Activated naive CD4-positive, alpha-beta T cell treated with anti-CD3 and anti-CD28 coated beads, Interleukin-2, amount 10 ng/mL, durations not matched to agents 7 days and 5 days (primary cell): ENCODE measurements at regions of chr10 and their contacts with region 1.

Region 1: DNA sequence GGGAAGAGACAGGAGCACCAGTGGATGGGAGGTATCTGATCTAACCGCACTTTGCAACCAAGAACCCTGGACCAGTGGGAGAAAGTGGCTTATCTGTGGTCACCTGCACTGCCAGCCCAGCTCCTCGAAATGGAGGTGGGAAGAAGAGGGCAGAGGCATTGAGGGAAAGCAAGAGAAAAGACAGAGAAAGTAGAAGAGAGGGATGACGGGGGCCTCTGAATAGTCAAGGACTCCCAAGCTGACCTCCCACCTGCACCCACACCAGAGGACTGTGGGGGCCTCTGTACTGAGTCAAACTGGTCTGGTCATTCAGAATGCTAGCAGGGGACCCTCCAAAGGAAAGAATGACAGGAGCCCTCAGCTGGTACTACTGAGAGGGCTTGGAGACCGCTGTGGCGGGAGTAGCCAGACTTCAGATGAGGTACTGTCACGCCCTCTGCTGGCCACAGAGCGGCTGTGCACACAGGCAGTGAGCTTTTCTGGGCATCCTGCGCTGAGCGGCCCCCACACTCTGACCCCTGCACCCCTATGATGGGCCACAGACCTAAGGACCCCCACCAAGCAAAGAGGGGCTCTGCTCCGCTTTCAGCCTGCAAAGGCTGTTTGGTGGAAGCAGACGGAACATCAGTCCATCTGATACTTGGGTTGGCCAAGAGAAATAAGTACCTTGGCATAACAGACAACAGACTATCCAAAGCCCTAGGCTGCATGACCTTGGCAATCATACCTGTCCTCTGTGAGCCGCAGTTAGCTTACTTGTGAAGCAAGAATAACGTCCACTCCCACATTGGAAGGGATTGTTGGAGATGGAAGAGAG is 112.9 kb downstream of the COL13A1 start:
- DNase-seq: peak; percentile 73
- H3K4me3 Mint-ChIP-seq: no peak overlapping the region
- H3K27ac Mint-ChIP-seq: no peak overlapping the region
- H3K4me1 Mint-ChIP-seq: no peaks in the 10 kb centered on the region
- H3K27me3 Mint-ChIP-seq: peaks cover 43% of the 10 kb centered on the region

Region 2: GRCh38 chr10:69644658-69645295 is 269.8 kb before region 1 on chr10:
- CTCF ChIA-PET with region 1: interaction called, 11 read pairs
- DNase-seq: peak; percentile 65
- H3K4me3 Mint-ChIP-seq: no peak overlapping the region
- H3K27ac Mint-ChIP-seq: no peak overlapping the region
- H3K4me1 Mint-ChIP-seq: peaks cover under 1% of the 10 kb centered on the region
- H3K27me3 Mint-ChIP-seq: peaks cover 32% of the 10 kb centered on the region

Region 3: GRCh38 chr10:69742928-69743602 is 171.5 kb before region 1 on chr10:
- CTCF ChIA-PET with region 1: interaction called, 21 read pairs
- DNase-seq: peak; percentile 45
- H3K4me3 Mint-ChIP-seq: no peak overlapping the region
- H3K27ac Mint-ChIP-seq: no peak overlapping the region
- H3K4me1 Mint-ChIP-seq: no peaks in the 10 kb centered on the region
- H3K27me3 Mint-ChIP-seq: peaks cover 55% of the 10 kb centered on the region

Region 4: GRCh38 chr10:69786791-69787190 is 127.8 kb before region 1 on chr10:
- CTCF ChIA-PET with region 1: interaction called, 58 read pairs
- DNase-seq: no peak
- H3K4me3 Mint-ChIP-seq: no peak overlapping the region
- H3K27ac Mint-ChIP-seq: no peak overlapping the region
- H3K4me1 Mint-ChIP-seq: no peaks in the 10 kb centered on the region
- H3K27me3 Mint-ChIP-seq: peaks cover 30% of the 10 kb centered on the region

Region 5: DNA sequence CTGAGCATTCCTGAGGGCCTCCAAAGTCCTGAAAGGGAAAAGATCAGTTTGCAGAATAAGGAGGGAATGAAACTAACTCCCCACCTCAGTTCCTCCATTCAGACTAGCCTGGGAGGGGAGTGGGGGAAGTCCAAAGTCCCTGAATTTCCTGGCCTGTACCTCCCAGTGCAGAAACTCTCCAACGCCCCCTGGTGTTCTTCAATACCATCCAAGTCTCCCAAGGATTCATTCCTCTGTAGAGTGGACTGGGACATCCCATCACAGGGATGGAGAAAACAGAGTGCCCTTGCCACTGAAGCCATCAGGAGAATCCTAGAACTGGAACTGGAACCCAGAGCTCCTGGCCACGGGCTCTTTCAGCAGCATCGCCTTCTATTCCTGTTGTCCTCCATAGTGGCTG is 114.5 kb before region 1 on chr10:
- CTCF ChIA-PET with region 1: interaction called, 10 read pairs
- DNase-seq: no peak
- H3K4me3 Mint-ChIP-seq: no peak overlapping the region
- H3K27ac Mint-ChIP-seq: no peak overlapping the region
- H3K4me1 Mint-ChIP-seq: peaks cover 14% of the 10 kb centered on the region
- H3K27me3 Mint-ChIP-seq: peaks cover 83% of the 10 kb centered on the region

Region 6: GRCh38 chr10:69901628-69902505 is 12.7 kb before region 1 on chr10:
- CTCF ChIA-PET with region 1: interaction called, 39 read pairs
- DNase-seq: peak; percentile 31
- H3K4me3 Mint-ChIP-seq: no peak overlapping the region
- H3K27ac Mint-ChIP-seq: no peak overlapping the region
- H3K4me1 Mint-ChIP-seq: no peaks in the 10 kb centered on the region
- H3K27me3 Mint-ChIP-seq: peaks cover 8% of the 10 kb centered on the region

Region 7: DNA sequence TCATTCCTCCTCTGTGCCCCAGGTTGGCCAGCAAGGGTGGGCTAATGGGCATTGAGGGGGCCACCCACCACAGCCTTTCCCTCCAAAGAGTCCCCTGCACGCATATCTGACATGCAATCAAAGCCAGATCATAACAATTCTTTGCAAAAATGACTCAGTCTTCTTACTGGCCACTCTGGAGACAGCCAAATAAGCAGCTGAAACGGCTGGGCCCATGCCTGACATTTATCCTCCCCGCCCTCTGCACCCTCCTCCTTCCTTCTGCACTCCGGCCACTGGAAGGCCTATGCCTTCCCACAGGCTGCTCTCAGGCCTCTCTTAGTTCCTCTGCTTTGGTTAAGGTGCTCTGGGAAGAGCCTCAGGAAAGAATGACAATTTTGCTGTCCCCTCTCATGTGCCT is 398.4 kb after region 1 on chr10:
- CTCF ChIA-PET with region 1: no interaction called
- DNase-seq: no peak
- H3K4me3 Mint-ChIP-seq: no peak overlapping the region
- H3K27ac Mint-ChIP-seq: no peak overlapping the region
- H3K4me1 Mint-ChIP-seq: no peaks in the 10 kb centered on the region
- H3K27me3 Mint-ChIP-seq: no peaks in the 10 kb centered on the region